RWPE1 (cell line): ENCODE measurements at regions of chr1 and their contacts with region 1.

Region 1: DNA sequence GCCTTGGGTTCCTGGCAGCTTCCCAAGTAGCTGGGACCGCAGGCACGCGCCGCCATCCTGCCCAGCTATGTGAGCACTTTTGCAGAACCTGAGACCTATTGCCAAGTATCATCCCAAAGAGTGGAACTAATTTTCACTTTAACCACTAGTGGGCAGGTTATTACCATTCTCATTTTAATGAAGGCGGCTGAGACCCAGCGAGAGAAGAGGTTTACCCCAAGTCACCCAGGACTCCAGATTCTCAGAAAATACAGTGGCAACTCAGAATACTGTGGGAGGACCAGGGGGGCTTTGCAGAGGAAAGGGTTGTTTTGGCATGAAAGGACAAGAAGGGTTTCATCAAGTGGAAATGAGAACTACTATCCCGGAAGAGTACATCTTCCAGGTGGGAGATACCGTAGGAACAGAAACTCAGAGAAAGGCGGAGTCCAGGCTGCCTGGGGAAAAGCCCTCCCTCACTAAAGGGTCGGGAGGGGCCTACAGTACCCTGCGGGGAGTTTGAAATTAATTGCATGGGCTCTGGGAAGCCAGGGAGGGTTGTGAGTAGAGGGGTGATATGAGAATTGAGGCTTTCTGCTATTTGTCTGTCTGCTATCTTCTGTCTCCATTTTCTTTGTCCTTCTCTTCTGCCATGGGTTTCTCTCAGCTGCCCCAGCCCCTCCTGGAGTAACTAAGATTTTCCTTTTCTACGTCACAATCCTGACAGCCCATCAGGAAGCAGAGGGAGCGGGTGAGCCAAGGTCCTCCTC is 7.2 kb upstream of the SEMA4A start:
- DNase-seq: peak; percentile 82
- H3K27ac ChIP-seq: peak overlapping the region; percentile 56
- CTCF ChIP-seq: peak; percentile 81

Region 2: DNA sequence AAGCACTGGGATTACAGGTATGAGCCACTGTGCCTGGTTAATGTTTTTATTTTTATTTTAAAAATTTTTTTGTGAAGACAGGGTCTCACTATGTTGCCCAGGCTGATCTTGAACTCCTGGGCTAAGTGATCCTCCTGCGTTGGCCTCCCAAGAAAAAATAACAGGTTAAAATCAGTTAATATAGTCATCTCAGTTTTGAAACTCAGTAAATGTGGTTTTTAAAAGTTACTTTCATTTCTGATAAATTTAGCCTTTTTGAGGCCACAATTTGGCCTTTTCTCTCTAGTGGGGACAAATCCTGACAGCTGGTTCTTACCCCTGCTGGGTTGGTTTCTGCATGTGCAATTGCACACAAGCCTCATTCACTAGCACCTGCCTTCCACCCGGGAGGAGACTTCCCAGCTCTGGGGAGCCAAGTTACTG is 79.9 kb after region 1 on chr1:
- CTCF ChIA-PET with region 1: interaction called, 14 read pairs
- POLR2A ChIA-PET with region 1: no interaction called
- DNase-seq: no peak
- H3K27ac ChIP-seq: peak overlapping the region; percentile 31
- CTCF ChIP-seq: no peak